BJ (cell line): ENCODE measurements at regions of chr11 and their contacts with region 1.

Region 1: DNA sequence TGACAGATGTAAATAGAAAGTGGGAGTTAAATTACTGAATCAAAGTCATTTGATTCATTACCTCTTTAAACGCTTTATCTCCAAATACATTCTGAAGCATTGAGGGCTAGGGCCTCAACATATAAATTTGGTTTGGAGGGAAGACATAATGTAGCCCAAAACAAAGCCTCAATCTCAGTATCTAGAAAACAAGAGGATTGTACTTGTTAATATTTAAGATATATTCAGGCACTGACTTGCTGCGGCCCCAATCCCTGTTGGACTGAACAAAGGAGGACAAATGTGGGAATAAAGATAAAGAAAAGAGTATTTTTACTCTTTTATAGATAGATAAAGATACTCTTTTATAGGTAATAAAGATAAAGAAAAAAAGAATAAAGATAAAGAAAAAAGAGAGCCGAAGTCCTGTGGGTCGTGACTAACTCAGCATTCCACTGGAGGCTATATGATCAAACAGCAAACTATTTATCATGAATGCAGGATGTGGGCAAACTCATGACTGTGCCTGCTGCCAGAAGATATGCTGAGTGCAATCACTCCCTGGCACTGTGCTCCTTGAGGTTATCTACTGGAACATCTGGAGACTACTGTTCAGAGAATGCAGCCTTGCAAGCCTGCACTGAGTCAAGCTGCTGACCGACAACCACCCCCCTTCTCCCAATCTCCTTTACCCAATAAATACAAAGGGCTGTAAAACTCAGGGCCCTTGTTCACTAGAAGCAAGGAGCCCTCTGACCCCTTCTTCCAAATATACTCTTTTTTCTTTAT is 6.9 kb downstream of the OR10V1 start:
- DNase-seq: peak; percentile 26
- H3K4me3 ChIP-seq: no peak overlapping the region
- H3K27me3 ChIP-seq: no peaks in the 10 kb centered on the region
- CTCF ChIP-seq: no peak

Region 2: DNA sequence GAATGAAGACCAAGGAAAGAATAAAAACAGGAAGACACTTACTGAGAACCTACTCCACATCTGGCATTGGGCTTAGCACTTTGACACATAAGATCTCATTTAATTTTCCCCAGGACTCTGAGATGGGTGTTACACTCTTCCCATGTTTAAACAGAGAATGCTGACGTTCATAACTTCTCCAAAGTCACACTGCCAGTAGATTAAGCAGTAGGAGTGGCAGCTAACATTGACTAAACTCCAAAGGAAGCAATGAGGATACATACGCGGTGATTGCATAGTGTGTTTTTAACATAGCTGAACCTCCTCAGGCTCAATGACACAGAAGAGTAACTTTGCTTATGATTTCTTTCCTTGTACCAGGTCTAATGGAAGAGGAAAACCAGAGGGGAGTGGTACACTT is 21.5 kb after region 1 on chr11:
- CTCF ChIA-PET with region 1: interaction called, 5 read pairs
- POLR2A ChIA-PET with region 1: interaction called, 16 read pairs
- DNase-seq: no peak
- H3K4me3 ChIP-seq: no peak overlapping the region
- H3K27me3 ChIP-seq: no peaks in the 10 kb centered on the region
- CTCF ChIP-seq: no peak

Region 3: GRCh38 chr11:60348116-60348515 is 641.4 kb after region 1 on chr11:
- CTCF ChIA-PET with region 1: no interaction called
- POLR2A ChIA-PET with region 1: no interaction called
- DNase-seq: no peak
- H3K4me3 ChIP-seq: no peak overlapping the region
- H3K27me3 ChIP-seq: no peaks in the 10 kb centered on the region
- CTCF ChIP-seq: no peak